ENCODE measurements at regions of chr22 and their contacts with region 1.

Region 1: DNA sequence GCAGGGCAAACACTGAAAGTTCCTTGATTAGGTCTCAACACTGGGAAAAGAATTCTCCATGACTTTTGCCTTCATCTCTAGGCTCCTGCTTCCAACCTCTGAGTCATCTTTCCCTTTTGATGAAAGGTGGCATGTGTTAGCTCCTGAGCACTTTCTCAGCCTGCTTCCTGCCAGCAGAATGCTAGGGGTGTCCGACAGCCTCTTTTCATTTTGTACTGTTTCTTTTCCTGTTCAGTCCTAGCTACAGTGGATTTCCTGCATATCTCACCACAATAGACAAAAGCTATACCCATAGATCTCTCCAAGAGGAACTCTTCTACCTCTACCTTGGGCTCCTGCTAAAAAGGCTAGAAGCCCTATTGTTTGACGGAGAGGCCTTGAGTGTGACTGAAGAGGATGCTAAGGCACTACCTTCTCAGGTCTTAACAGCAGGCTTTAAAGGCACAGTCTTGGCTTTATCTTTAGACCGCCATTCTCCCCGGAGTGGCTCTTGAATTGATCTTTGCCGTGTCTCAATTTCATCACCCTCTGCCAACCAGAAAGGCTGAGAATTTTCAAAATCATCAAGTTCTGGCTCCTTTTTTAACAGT is 145.5 kb downstream of the RBFOX2 start:
- DNase-seq: peak; percentile 67
- H3K4me3 ChIP-seq: peak overlapping the region; percentile 49
- H3K27ac ChIP-seq: peak overlapping the region; percentile 87
- H3K4me1 ChIP-seq: peaks cover 66% of the 10 kb centered on the region
- CTCF ChIP-seq: no peak

Region 2: DNA sequence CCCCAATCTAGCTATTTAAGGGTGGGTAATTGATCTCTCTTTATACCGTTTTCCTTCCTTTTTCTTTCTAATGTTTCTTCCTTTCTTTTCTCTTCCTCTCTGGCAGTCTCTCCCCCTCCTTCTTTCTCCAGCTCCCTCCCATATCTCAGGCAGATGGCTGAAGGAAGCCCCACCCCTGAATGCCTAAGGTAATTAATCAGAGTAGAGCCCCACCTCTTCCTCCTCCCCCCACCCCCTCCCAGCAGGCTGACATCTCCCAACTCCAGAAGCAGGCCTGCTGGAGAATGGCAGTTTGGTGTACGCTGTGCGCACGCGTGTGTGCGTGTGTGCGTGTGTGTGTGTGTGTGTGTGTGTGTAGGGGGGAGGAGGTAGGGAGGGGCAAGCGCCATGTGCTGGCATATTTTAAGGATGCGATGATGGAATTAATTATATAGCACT is 42.8 kb before region 1 on chr22:
- CTCF ChIA-PET with region 1: no interaction called
- POLR2A ChIA-PET with region 1: no interaction called
- intact Hi-C with region 1: no loop called
- DNase-seq: peak; percentile 74
- H3K4me3 ChIP-seq: peak overlapping the region; percentile 74
- H3K27ac ChIP-seq: peak overlapping the region; percentile 67
- H3K4me1 ChIP-seq: peaks cover 81% of the 10 kb centered on the region
- CTCF ChIP-seq: no peak

Region 3: DNA sequence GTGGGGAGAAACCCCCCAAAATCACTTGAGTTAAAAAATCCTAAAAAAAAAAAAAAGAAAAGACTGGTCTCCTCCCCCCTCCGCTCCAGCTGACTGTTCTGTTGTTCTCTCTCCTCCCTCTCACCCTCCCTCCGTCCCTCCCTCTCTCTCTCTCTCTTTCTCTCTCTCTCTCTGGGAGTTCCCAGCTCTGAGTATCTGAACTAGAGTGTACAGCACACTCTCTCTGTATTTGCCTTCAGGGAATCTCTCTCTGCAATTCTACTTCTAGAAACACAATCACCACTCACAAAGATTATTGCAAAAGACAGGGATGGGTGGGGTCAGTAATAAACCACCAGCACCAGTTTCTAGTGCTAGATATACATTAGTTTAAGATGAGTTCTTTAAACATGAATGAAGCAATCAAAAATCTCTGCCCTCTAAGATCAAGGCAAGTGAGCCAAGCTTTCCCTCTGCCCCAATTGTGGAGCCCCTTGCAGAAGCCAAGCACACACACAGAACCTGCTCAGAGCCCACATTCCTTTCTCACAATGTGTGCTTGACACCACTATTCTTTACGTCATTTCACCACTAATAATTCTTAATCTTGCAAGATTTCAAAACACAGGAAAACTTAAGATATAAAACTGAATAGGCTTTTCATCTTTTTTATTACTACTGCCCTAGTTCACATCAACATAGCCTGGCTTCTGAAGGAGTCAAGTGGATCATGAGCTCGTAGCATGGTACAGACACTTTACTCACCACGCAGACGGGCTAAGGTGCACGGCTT is 12.0 kb after region 1 on chr22:
- CTCF ChIA-PET with region 1: interaction called, 5 read pairs
- POLR2A ChIA-PET with region 1: interaction called, 17 read pairs
- intact Hi-C with region 1: no loop called
- DNase-seq: peak; percentile 61
- H3K4me3 ChIP-seq: peak overlapping the region; percentile 68
- H3K27ac ChIP-seq: peak overlapping the region; percentile 73
- H3K4me1 ChIP-seq: peaks cover 83% of the 10 kb centered on the region
- CTCF ChIP-seq: no peak; the same call in 1 of the 2 replicates